Right cardiac atrium (tissue), 5 donors: ENCODE measurements at regions of chr12 and their contacts with region 1.

Region 1: DNA sequence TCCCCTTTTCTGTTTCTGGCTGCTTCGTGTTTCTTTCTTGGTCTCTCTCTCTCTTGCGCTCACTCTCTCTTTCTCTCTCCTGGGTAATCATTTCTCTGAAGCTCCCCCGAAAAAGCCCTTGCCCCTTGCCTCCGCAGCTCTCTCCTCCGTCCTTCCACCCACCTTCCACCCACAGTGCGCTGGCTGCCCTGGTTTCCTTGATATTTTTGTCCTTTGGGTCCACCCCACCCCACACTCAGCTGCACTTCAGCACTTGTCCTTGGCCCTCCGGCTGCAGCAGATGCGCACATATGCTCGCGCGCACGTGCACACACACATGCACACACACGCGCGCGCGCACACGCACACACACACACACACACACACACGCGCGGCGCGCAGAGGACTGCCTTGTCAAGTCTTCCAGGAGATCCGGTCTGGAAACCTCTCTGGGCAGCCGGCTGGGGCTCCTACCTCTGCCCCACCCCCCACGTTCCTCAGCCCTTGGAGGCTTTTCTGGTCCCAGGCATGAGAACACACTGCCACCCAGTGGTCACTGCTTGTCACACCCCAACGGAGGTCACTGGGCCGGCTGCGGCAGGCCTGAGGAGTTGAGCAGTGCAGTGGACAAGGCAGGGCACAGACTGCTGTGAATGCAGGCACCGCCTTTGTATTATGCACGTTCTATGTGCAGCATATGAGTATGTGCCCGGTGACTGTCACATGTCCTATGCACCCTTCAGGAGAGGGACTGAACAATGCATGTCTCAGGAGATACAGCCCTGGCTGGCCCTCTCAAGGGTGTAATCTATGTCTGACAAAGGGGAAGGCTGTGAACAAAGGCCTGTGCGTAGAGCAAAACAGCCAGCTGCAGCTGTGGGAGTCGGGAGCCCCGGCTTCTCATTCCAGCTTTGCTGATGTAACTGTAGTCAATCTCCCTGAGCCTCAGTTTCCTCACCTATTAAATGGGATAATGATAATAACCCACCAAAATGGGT is 6.5 kb downstream of the LAG3 start:
- DNase-seq: peak; percentile 95 to 97 (median 96)
- ATAC-seq: peak; percentile 96
- H3K4me3 ChIP-seq: peak overlapping the region; percentile 15
- H3K27ac ChIP-seq: peak overlapping the region; percentile 2
- H3K4me1 ChIP-seq: no peaks in the 10 kb centered on the region
- H3K27me3 ChIP-seq: no peaks in the 10 kb centered on the region

Region 2: GRCh38 chr12:6434205-6435140 is 344.4 kb before region 1 on chr12:
- intact Hi-C with region 1: no loop called
- DNase-seq: no peak
- ATAC-seq: no peak
- H3K4me3 ChIP-seq: no peak overlapping the region
- H3K27ac ChIP-seq: no peak overlapping the region
- H3K4me1 ChIP-seq: peaks cover 3% of the 10 kb centered on the region
- H3K27me3 ChIP-seq: no peaks in the 10 kb centered on the region

Region 3: GRCh38 chr12:6752921-6753771 is 25.7 kb before region 1 on chr12 and contains the start of gene MLF2:
- intact Hi-C with region 1: loop called in 1 of 4 experiments (anchors 2 kb)
- DNase-seq: peak; percentile 99
- ATAC-seq: peak; percentile 97
- H3K4me3 ChIP-seq: peak within 1 kb of the TSS; percentile 96
- H3K27ac ChIP-seq: peak within 1 kb of the TSS; percentile 98
- H3K4me1 ChIP-seq: no peaks in the 10 kb centered on the region
- H3K27me3 ChIP-seq: no peaks in the 10 kb centered on the region
- total RNA-seq, gene MLF2: 123 to 135 (median 130) TPM

Region 4: GRCh38 chr12:6937481-6938297 is 158.8 kb after region 1 on chr12:
- intact Hi-C with region 1: no loop called
- DNase-seq: peak; percentile 95 to 97 (median 97)
- ATAC-seq: peak; percentile 86 to 90
- H3K4me3 ChIP-seq: peak overlapping the region; percentile 32
- H3K27ac ChIP-seq: peak overlapping the region; percentile 77
- H3K4me1 ChIP-seq: peaks cover 5% of the 10 kb centered on the region
- H3K27me3 ChIP-seq: no peaks in the 10 kb centered on the region